SK-N-SH (cell line): ENCODE measurements at regions of chr2 and their contacts with region 1.

Region 1: GRCh38 chr2:76599732-76600368 is 889.1 kb upstream of the GCFC2 start:
- DNase-seq: peak; percentile 35
- H3K4me3 ChIP-seq: peak overlapping the region in 1 of 2 experiments; percentile 25; a peak in 1 of 4 replicates
- H3K27ac ChIP-seq: peak overlapping the region in 1 of 2 experiments; percentile 80; a peak in 2 of 4 replicates
- H3K4me1 ChIP-seq: no peaks in the 10 kb centered on the region
- H3K27me3 ChIP-seq: no peaks in the 10 kb centered on the region
- CTCF ChIP-seq: peak; percentile 87
- EP300 ChIP-seq: no peak
- RAD21 ChIP-seq: peak; percentile 84

Region 2: DNA sequence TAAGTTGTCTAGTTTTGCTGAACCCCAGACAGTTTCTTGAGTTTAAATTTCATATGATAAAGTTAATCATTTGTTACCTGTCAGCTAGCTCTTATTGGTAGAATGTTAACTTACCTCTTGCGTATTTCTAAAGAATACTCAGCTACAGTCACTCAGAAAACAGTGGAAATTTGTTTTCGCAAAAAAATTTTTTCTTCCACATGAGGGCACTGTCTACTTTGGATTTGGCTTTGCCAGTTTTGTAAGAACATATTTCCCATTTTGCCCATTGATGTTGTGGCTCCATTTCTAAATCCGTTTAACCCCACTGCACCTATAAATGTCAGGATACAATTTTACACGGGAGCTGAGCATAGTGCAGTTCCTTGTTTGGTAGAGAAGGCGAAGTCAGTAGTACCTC is 870.0 kb before region 1 on chr2:
- CTCF ChIA-PET with region 1: interaction called, 11 read pairs
- POLR2A ChIA-PET with region 1: no interaction called
- DNase-seq: peak; percentile 26
- H3K4me3 ChIP-seq: no peak overlapping the region
- H3K27ac ChIP-seq: peak overlapping the region in 1 of 2 experiments; percentile 61; a peak in 1 of 4 replicates
- H3K4me1 ChIP-seq: peaks cover 0 to 10% of the 10 kb centered on the region in 2 experiments; a peak in 1 of 4 replicates
- H3K27me3 ChIP-seq: no peaks in the 10 kb centered on the region; the same call in 1 of the 2 replicates
- CTCF ChIP-seq: peak; percentile 44
- EP300 ChIP-seq: no peak
- RAD21 ChIP-seq: peak; percentile 85

Region 3: GRCh38 chr2:76323381-76323780 is 276.5 kb before region 1 on chr2:
- CTCF ChIA-PET with region 1: interaction called, 10 read pairs
- POLR2A ChIA-PET with region 1: no interaction called
- DNase-seq: peak; percentile 38
- H3K4me3 ChIP-seq: no peak overlapping the region
- H3K27ac ChIP-seq: peak overlapping the region in 1 of 2 experiments; percentile 97; a peak in 2 of 4 replicates
- H3K4me1 ChIP-seq: peaks cover 0 to 11% of the 10 kb centered on the region in 2 experiments; a peak in 2 of 4 replicates
- H3K27me3 ChIP-seq: no peaks in the 10 kb centered on the region
- CTCF ChIP-seq: no peak
- EP300 ChIP-seq: peak in 1 of 2 experiments; percentile 99; a peak in 2 of 4 replicates
- RAD21 ChIP-seq: peak; percentile 31

Region 4: GRCh38 chr2:76569819-76570218 is 30.0 kb before region 1 on chr2:
- CTCF ChIA-PET with region 1: interaction called, 11 read pairs
- POLR2A ChIA-PET with region 1: no interaction called
- DNase-seq: no peak
- H3K4me3 ChIP-seq: no peak overlapping the region
- H3K27ac ChIP-seq: no peak overlapping the region; a peak in 1 of 4 replicates
- H3K4me1 ChIP-seq: peaks cover 0 to 2% of the 10 kb centered on the region in 2 experiments; a peak in 1 of 4 replicates
- H3K27me3 ChIP-seq: no peaks in the 10 kb centered on the region
- CTCF ChIP-seq: no peak
- EP300 ChIP-seq: no peak
- RAD21 ChIP-seq: no peak

Region 5: DNA sequence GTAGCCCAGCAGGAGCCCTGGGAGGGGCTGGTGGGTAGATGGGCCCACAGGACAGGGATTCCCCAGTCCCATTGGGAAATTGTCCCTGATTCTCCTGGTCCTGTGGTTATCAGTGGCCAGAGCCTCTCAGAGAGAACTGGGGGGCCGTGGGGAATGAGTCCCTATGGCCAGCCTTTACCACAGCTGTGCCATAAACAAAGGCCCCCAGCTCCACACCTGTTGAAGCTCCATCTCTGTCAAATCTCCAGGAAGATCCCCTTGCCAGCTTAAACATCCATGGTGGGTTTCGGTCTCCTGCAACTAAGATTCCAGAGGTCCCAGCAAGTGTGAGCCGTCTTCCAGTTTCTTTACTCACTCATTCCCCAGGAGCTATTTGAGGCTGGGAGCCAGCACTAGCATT is 25.3 kb after region 1 on chr2:
- CTCF ChIA-PET with region 1: no interaction called
- POLR2A ChIA-PET with region 1: no interaction called
- DNase-seq: no peak
- H3K4me3 ChIP-seq: no peak overlapping the region
- H3K27ac ChIP-seq: no peak overlapping the region
- H3K4me1 ChIP-seq: no peaks in the 10 kb centered on the region
- H3K27me3 ChIP-seq: no peaks in the 10 kb centered on the region
- CTCF ChIP-seq: no peak
- EP300 ChIP-seq: no peak
- RAD21 ChIP-seq: no peak

Region 6: GRCh38 chr2:76678383-76679024 is 78.7 kb after region 1 on chr2:
- CTCF ChIA-PET with region 1: no interaction called
- POLR2A ChIA-PET with region 1: no interaction called
- DNase-seq: no peak
- H3K4me3 ChIP-seq: no peak overlapping the region
- H3K27ac ChIP-seq: no peak overlapping the region
- H3K4me1 ChIP-seq: no peaks in the 10 kb centered on the region
- H3K27me3 ChIP-seq: no peaks in the 10 kb centered on the region
- CTCF ChIP-seq: no peak
- EP300 ChIP-seq: no peak
- RAD21 ChIP-seq: no peak